ENCODE measurements at regions of chr2 and their contacts with region 1.

Region 1: GRCh38 chr2:142603759-142604158 is 273.7 kb upstream of the KYNU start:
- DNase-seq: no peak
- ATAC-seq: no peak
- H3K4me3 ChIP-seq: no peak overlapping the region
- H3K27ac ChIP-seq: no peak overlapping the region
- H3K4me1 ChIP-seq: peaks cover 10% of the 10 kb centered on the region; the same call in 1 of the 2 replicates
- H3K27me3 ChIP-seq: no peaks in the 10 kb centered on the region
- CTCF ChIP-seq: no peak
- EP300 ChIP-seq: no peak
- POLR2A ChIP-seq: no peak
- RAD21 ChIP-seq: no peak

Region 2: GRCh38 chr2:141048951-141049350 is 1554.8 kb before region 1 on chr2:
- CTCF ChIA-PET with region 1: no interaction called
- POLR2A ChIA-PET with region 1: no interaction called
- in situ Hi-C with region 1: no loop called
- intact Hi-C with region 1: no loop called
- DNase-seq: no peak
- ATAC-seq: no peak
- H3K4me3 ChIP-seq: no peak overlapping the region
- H3K27ac ChIP-seq: no peak overlapping the region
- H3K4me1 ChIP-seq: no peaks in the 10 kb centered on the region
- H3K27me3 ChIP-seq: no peaks in the 10 kb centered on the region
- CTCF ChIP-seq: no peak
- EP300 ChIP-seq: no peak
- POLR2A ChIP-seq: no peak
- RAD21 ChIP-seq: no peak

Region 3: GRCh38 chr2:142286606-142287005 is 317.2 kb before region 1 on chr2:
- CTCF ChIA-PET with region 1: interaction called, 7 read pairs
- POLR2A ChIA-PET with region 1: no interaction called
- in situ Hi-C with region 1: no loop called
- intact Hi-C with region 1: loop called (anchors 2 kb)
- DNase-seq: peak; percentile 55
- ATAC-seq: peak; percentile 97
- H3K4me3 ChIP-seq: no peak overlapping the region
- H3K27ac ChIP-seq: no peak overlapping the region
- H3K4me1 ChIP-seq: no peaks in the 10 kb centered on the region
- H3K27me3 ChIP-seq: no peaks in the 10 kb centered on the region
- CTCF ChIP-seq: peak; percentile 80
- EP300 ChIP-seq: no peak
- POLR2A ChIP-seq: no peak
- RAD21 ChIP-seq: peak; percentile 36; the same call in 1 of the 2 replicates

Measured in HepG2 (cell line).